ENCODE measurements at regions of chr17 and their contacts with region 1.

Region 1: GRCh38 chr17:36183001-36183971 is 6.8 kb upstream of the TBC1D3B start:
- DNase-seq: peak in 1 of 2 experiments; percentile 89
- H3K4me3 ChIP-seq: peak overlapping the region; percentile 38 to 68 (median 46)
- H3K27ac ChIP-seq: no peak overlapping the region
- H3K4me1 ChIP-seq: peaks cover 0 to 8% (median 4%) of the 10 kb centered on the region in 4 experiments; a peak in 4 of 7 replicates
- H3K27me3 ChIP-seq: peaks cover 3 to 24% (median 15%) of the 10 kb centered on the region in 4 experiments
- CTCF ChIP-seq: peak in 2 of 3 experiments; percentile 32 to 38; a peak in 3 of 4 replicates
- EP300 ChIP-seq: no peak
- POLR2A ChIP-seq: no peak
- RAD21 ChIP-seq: peak; percentile 43 to 50

Region 2: GRCh38 chr17:36066365-36066985 is 116.8 kb before region 1 on chr17:
- CTCF ChIA-PET with region 1: no interaction called
- POLR2A ChIA-PET with region 1: no interaction called
- DNase-seq: no peak
- H3K4me3 ChIP-seq: no peak overlapping the region
- H3K27ac ChIP-seq: no peak overlapping the region
- H3K4me1 ChIP-seq: no peaks in the 10 kb centered on the region
- H3K27me3 ChIP-seq: no peaks in the 10 kb centered on the region
- CTCF ChIP-seq: no peak
- EP300 ChIP-seq: no peak
- POLR2A ChIP-seq: no peak
- RAD21 ChIP-seq: no peak

Region 3: GRCh38 chr17:36148559-36149295 is 34.6 kb before region 1 on chr17:
- CTCF ChIA-PET with region 1: no interaction called
- POLR2A ChIA-PET with region 1: no interaction called
- DNase-seq: peak; percentile 19 to 76
- H3K4me3 ChIP-seq: no peak overlapping the region
- H3K27ac ChIP-seq: no peak overlapping the region
- H3K4me1 ChIP-seq: no peaks in the 10 kb centered on the region
- H3K27me3 ChIP-seq: no peaks in the 10 kb centered on the region
- CTCF ChIP-seq: peak; percentile 90 to 99 (median 95)
- EP300 ChIP-seq: no peak
- POLR2A ChIP-seq: no peak
- RAD21 ChIP-seq: peak; percentile 95 to 96

Region 4: GRCh38 chr17:36195434-36196130 is 12.3 kb after region 1 on chr17:
- CTCF ChIA-PET with region 1: interaction called, 13 read pairs
- POLR2A ChIA-PET with region 1: interaction called, 3 read pairs
- DNase-seq: no peak
- H3K4me3 ChIP-seq: no peak overlapping the region
- H3K27ac ChIP-seq: no peak overlapping the region
- H3K4me1 ChIP-seq: peaks cover 0 to 5% (median 2%) of the 10 kb centered on the region in 4 experiments; a peak in 2 of 7 replicates
- H3K27me3 ChIP-seq: peaks cover 0 to 3% (median 2%) of the 10 kb centered on the region in 4 experiments; a peak in 4 of 7 replicates
- CTCF ChIP-seq: no peak
- EP300 ChIP-seq: no peak
- POLR2A ChIP-seq: no peak
- RAD21 ChIP-seq: no peak

Measured in H1 (cell line).